Posterior cingulate gyrus (tissue), 11 donors: ENCODE measurements at regions of chr1 and their contacts with region 1.

Region 1: GRCh38 chr1:205493241-205494085 is 11.0 kb upstream of the CDK18 start:
- DNase-seq: peak in 2 of 10 donors; percentile 55 to 78

Region 2: GRCh38 chr1:205523891-205524793 is 30.7 kb after region 1 on chr1:
- intact Hi-C with region 1: loop called (anchors 1 kb)
- DNase-seq: peak; percentile 76 to 98 (median 92)

Region 3: DNA sequence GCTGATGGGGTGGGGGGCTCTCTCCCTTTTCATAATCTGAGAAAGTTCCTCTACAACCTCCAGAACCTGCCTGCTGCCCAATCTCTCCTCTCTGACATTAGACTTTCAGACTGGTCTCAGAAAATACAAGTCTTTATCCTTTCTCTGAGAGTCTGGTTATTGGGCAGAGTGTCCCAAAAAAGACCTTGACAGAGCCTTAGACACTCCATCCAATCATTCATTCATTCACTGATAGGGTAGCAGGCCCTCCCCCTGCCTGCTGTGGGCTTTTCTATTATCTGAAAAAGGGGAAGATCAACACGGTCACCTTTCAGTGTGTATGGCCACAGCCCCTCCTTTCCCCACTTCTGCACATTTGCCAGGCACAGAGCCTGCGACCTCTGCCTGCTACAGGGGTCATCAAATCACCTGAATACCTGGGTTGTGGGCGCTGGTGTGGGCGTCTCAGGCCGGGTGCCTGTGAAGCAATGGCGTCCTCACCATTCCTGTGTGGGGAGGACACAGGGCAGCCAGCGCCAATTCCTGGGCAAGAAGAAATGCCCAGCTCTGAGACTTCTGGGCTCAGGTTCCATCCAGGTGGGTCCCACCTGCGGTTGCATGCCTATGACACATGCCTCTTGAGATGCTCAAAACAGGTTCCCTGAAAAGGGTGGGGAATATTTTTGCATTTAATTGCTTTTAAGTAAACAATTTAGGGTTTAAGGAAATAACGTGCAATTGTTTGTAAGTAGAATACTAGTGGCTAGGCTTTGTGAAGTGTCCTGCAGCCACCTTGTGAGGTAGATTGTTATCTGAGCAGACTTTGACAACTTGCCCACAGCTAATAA is 85.5 kb after region 1 on chr1:
- intact Hi-C with region 1: no loop called
- DNase-seq: peak in 1 of 10 donors; percentile 55